ENCODE measurements at regions of chr12 and their contacts with region 1.

Region 1: GRCh38 chr12:45728630-45729232 is 775 bp upstream of the ARID2 start:
- DNase-seq: peak; percentile 88 to 98
- H3K4me3 ChIP-seq: peak overlapping the region; percentile 74 to 95
- H3K27ac ChIP-seq: peak overlapping the region; percentile 99
- H3K4me1 ChIP-seq: peaks cover 0 to 26% of the 10 kb centered on the region in 2 donors
- H3K27me3 ChIP-seq: no peaks in the 10 kb centered on the region
- CTCF ChIP-seq: peak; percentile 89 to 97 (median 93)

Region 2: GRCh38 chr12:45170456-45171042 is 558.2 kb before region 1 on chr12:
- intact Hi-C with region 1: loop called (anchors 5 kb)
- DNase-seq: peak in 1 of 2 donors; percentile 84
- H3K4me3 ChIP-seq: no peak overlapping the region
- H3K27ac ChIP-seq: no peak overlapping the region
- H3K4me1 ChIP-seq: no peaks in the 10 kb centered on the region
- H3K27me3 ChIP-seq: no peaks in the 10 kb centered on the region
- CTCF ChIP-seq: peak; percentile 59 to 79 (median 66)

Region 3: GRCh38 chr12:45215419-45216229 is 513.1 kb before region 1 on chr12 and contains the start of gene ANO6:
- intact Hi-C with region 1: loop called (anchors 5 kb)
- DNase-seq: peak; percentile 53 to 95
- H3K4me3 ChIP-seq: peak within 1 kb of the TSS; percentile 85 to 93
- H3K27ac ChIP-seq: peak within 1 kb of the TSS; percentile 92 to 97
- H3K4me1 ChIP-seq: peaks cover 6 to 11% of the 10 kb centered on the region in 2 donors
- H3K27me3 ChIP-seq: no peaks in the 10 kb centered on the region
- CTCF ChIP-seq: peak in 2 of 3 experiments; percentile 12 to 22
- total RNA-seq, gene ANO6: 49.6 TPM

Region 4: DNA sequence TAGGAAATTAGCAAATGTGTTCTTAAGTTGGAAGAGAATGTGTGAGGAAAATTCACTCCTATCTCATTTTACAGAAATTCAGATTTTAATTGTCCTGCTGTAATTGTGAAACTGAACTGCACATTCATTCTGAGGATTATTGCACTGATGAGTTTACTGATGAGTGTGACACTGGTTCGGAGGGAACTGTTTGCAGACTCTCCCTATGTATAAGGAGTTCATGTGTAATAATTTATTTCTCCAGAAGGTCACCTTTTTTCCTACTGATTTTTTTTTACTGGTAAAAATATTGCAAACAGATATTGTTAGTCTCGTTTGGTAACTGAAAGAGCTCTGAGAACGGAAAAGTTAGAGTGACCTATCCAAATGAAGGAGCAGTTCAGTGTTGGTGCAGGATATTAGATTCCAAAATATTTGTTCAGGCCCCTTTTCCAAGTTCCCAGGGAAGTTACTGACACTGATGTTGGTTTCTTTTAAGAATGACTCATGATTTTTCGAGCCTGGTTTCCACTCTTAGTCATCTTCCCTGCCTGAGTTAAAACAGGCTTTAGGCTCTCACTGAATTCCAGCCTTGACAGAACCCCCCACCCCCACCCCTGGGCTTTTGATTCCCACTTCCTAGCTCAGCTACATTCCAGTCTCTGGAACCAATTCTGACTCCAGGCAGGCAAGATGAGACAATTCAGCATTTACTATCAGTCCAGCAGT is 494.4 kb before region 1 on chr12:
- intact Hi-C with region 1: loop called (anchors 5 kb)
- DNase-seq: peak in 1 of 2 donors; percentile 81
- H3K4me3 ChIP-seq: peak overlapping the region; percentile 28 to 30
- H3K27ac ChIP-seq: peak overlapping the region; percentile 85 to 91
- H3K4me1 ChIP-seq: peaks cover 14 to 59% of the 10 kb centered on the region in 2 donors
- H3K27me3 ChIP-seq: no peaks in the 10 kb centered on the region
- CTCF ChIP-seq: no peak

Region 5: DNA sequence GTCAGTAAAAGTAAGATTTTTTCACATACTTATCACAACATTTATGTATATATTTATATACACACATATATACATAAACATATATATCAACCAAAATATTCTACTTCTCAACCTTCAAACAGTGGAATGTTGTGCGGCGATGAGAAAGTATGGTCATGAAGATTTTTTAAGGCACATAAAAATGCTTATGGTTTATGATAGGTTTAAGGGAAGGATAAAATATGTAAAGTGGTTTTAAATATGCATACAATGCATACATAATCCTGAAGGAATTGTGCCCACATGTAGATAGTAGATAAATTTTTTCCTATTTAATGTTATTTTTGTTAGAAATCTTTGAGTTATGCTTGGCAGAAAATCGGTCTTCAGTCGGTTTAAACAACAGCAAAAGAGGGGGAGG is 330.2 kb before region 1 on chr12:
- intact Hi-C with region 1: no loop called
- DNase-seq: no peak
- H3K4me3 ChIP-seq: no peak overlapping the region
- H3K27ac ChIP-seq: peak overlapping the region in 1 of 2 donors; percentile 22
- H3K4me1 ChIP-seq: peaks cover 0 to 10% of the 10 kb centered on the region in 2 donors
- H3K27me3 ChIP-seq: no peaks in the 10 kb centered on the region
- CTCF ChIP-seq: no peak

Region 6: GRCh38 chr12:45409966-45410365 is 318.8 kb before region 1 on chr12:
- intact Hi-C with region 1: loop called (anchors 5 kb)
- DNase-seq: no peak
- H3K4me3 ChIP-seq: no peak overlapping the region
- H3K27ac ChIP-seq: peak overlapping the region; percentile 43 to 67
- H3K4me1 ChIP-seq: peaks cover 0 to 22% of the 10 kb centered on the region in 2 donors
- H3K27me3 ChIP-seq: no peaks in the 10 kb centered on the region
- CTCF ChIP-seq: no peak

Region 7: GRCh38 chr12:45543906-45544315 is 184.8 kb before region 1 on chr12:
- intact Hi-C with region 1: loop called (anchors 5 kb)
- DNase-seq: peak in 1 of 2 donors; percentile 65
- H3K4me3 ChIP-seq: no peak overlapping the region
- H3K27ac ChIP-seq: no peak overlapping the region
- H3K4me1 ChIP-seq: no peaks in the 10 kb centered on the region
- H3K27me3 ChIP-seq: no peaks in the 10 kb centered on the region
- CTCF ChIP-seq: peak; percentile 50 to 74 (median 67)

Region 8: DNA sequence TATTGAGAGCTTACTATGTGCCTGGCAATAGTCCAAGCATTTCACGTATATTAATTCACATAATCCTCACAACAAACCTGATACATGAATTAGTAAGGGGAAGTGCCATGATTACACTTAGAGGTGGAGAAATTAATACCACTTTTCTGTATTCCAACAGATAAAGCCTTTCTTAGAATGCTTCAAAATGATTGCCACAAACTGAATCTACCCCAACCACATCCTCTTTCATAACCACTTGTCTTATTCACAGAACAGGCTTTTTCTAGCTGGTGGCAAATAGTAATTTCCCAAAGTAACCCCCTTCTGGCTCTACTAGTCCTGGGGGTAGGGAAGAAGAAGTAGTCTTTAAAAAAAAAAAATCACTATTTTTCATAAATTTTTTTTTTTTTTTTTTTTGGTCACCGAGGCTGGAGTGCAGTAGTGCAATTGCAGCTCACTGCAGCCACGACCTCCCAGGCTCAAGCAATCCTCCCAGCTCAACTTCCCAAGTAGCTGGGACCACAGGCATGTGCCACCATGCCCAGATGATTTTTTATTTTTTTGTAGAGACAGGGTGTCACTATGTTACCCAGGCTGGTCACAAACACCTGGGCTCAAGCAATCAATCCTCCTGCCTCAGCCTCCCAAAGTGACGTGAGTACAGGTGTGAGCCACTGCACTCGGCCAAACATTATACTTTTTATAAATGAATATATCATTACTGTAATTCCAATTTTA is 58.2 kb before region 1 on chr12:
- intact Hi-C with region 1: loop called (anchors 2 kb)
- DNase-seq: no peak
- H3K4me3 ChIP-seq: no peak overlapping the region
- H3K27ac ChIP-seq: peak overlapping the region in 1 of 2 donors; percentile 9
- H3K4me1 ChIP-seq: peaks cover 0 to 14% of the 10 kb centered on the region in 2 donors
- H3K27me3 ChIP-seq: no peaks in the 10 kb centered on the region
- CTCF ChIP-seq: no peak